ENCODE measurements at regions of chr3 and their contacts with region 1.

Region 1: GRCh38 chr3:66500576-66501482 is at the start of gene LRIG1:
- DNase-seq: peak; percentile 97
- ATAC-seq: peak; percentile 96
- H3K4me3 ChIP-seq: peak within 1 kb of the TSS; percentile 97
- H3K27ac ChIP-seq: peak within 1 kb of the TSS; percentile 95
- H3K4me1 ChIP-seq: peaks cover 1% of the 10 kb centered on the region
- H3K27me3 ChIP-seq: peaks cover 3% of the 10 kb centered on the region; the same call in 1 of the 2 replicates
- CTCF ChIP-seq: peak; percentile 38
- POLR2A ChIP-seq: peak; percentile 92
- RAD21 ChIP-seq: peak; percentile 31
- total RNA-seq, gene LRIG1: 69.2 and 87.8 TPM in 2 replicates

Region 2: GRCh38 chr3:66253790-66254620 is 246.8 kb before region 1 on chr3:
- CTCF ChIA-PET with region 1: no interaction called
- POLR2A ChIA-PET with region 1: no interaction called
- dilution Hi-C with region 1: no loop called
- in situ Hi-C with region 1: no loop called
- intact Hi-C with region 1: loop called (anchors 5 kb)
- DNase-seq: peak; percentile 67
- ATAC-seq: peak; percentile 70
- H3K4me3 ChIP-seq: no peak overlapping the region
- H3K27ac ChIP-seq: no peak overlapping the region
- H3K4me1 ChIP-seq: peaks cover 12% of the 10 kb centered on the region
- H3K27me3 ChIP-seq: no peaks in the 10 kb centered on the region
- CTCF ChIP-seq: peak; percentile 75
- POLR2A ChIP-seq: no peak
- RAD21 ChIP-seq: peak; percentile 77

Region 3: DNA sequence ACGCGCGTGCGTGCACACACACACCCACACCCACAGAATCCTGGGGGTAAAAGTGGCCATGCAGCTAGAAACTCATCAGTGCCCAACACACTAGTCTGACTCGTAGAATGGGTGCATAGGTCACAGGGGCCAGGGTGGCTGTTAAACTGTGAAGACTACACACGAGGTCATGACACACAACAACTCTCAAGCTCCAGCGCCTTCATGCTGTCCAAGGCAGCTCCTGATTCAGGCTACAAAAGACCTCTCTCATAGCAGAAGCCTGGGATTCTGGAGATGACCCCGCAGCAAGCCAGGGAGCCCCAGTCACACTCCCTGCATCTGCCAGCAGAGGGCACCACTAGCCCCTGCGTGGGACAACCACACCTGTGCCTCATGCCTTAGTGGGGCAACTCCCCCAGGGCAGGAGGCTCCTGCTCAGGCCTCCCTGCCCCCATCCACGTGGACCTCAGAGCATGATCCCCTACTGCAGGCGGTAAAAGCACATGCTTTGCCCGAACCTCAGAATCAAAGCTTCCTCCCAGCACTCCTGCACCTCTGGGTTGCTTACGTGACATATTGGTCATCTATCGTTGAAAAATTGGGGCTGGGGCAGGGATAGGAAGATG is 93.1 kb before region 1 on chr3:
- CTCF ChIA-PET with region 1: no interaction called
- POLR2A ChIA-PET with region 1: no interaction called
- dilution Hi-C with region 1: no loop called
- in situ Hi-C with region 1: no loop called
- intact Hi-C with region 1: loop called (anchors 1 kb)
- DNase-seq: peak; percentile 55
- ATAC-seq: peak; percentile 50; the same call in 1 of the 2 replicates
- H3K4me3 ChIP-seq: no peak overlapping the region
- H3K27ac ChIP-seq: no peak overlapping the region
- H3K4me1 ChIP-seq: peaks cover 25% of the 10 kb centered on the region
- H3K27me3 ChIP-seq: no peaks in the 10 kb centered on the region
- CTCF ChIP-seq: peak; percentile 80
- POLR2A ChIP-seq: no peak
- RAD21 ChIP-seq: peak; percentile 91

Region 4: GRCh38 chr3:66413151-66413751 is 87.6 kb before region 1 on chr3:
- CTCF ChIA-PET with region 1: no interaction called
- POLR2A ChIA-PET with region 1: no interaction called
- dilution Hi-C with region 1: no loop called
- in situ Hi-C with region 1: no loop called
- intact Hi-C with region 1: loop called (anchors 1 kb)
- DNase-seq: peak; percentile 100
- ATAC-seq: peak; percentile 93
- H3K4me3 ChIP-seq: no peak overlapping the region
- H3K27ac ChIP-seq: peak overlapping the region; percentile 79
- H3K4me1 ChIP-seq: peaks cover 22% of the 10 kb centered on the region
- H3K27me3 ChIP-seq: no peaks in the 10 kb centered on the region
- CTCF ChIP-seq: 0 out of 2 replicates have a peak, but pooled peaks have one; percentile 13
- POLR2A ChIP-seq: peak; percentile 46; the same call in 1 of the 2 replicates
- RAD21 ChIP-seq: peak; percentile 35

Region 5: DNA sequence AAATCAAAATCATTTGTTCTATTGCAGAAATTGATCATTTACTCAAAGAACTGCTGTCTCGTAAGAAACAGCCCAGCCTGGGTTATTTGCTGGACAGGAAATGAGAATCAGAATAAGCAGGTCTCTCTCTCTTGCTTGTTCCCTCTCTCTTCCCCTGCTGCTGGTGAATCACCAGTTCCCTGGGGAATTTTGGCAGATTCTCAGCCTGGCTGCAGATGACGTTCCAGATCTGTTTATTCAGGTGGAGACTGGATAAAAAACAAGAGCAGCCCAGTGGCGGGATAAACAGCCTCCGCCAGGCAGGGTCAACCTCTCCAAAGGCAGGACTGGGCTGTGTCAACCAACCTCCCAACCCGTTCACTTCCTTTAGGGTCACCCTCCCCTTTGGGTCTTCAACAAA is 72.1 kb before region 1 on chr3:
- CTCF ChIA-PET with region 1: no interaction called
- POLR2A ChIA-PET with region 1: no interaction called
- dilution Hi-C with region 1: no loop called
- in situ Hi-C with region 1: loop called (anchors 5 kb)
- intact Hi-C with region 1: no loop called
- DNase-seq: peak; percentile 100
- ATAC-seq: peak; percentile 66
- H3K4me3 ChIP-seq: no peak overlapping the region
- H3K27ac ChIP-seq: peak overlapping the region; percentile 62
- H3K4me1 ChIP-seq: peaks cover 37% of the 10 kb centered on the region
- H3K27me3 ChIP-seq: no peaks in the 10 kb centered on the region
- CTCF ChIP-seq: no peak
- POLR2A ChIP-seq: peak; percentile 52; the same call in 1 of the 2 replicates
- RAD21 ChIP-seq: peak; percentile 25

Region 6: DNA sequence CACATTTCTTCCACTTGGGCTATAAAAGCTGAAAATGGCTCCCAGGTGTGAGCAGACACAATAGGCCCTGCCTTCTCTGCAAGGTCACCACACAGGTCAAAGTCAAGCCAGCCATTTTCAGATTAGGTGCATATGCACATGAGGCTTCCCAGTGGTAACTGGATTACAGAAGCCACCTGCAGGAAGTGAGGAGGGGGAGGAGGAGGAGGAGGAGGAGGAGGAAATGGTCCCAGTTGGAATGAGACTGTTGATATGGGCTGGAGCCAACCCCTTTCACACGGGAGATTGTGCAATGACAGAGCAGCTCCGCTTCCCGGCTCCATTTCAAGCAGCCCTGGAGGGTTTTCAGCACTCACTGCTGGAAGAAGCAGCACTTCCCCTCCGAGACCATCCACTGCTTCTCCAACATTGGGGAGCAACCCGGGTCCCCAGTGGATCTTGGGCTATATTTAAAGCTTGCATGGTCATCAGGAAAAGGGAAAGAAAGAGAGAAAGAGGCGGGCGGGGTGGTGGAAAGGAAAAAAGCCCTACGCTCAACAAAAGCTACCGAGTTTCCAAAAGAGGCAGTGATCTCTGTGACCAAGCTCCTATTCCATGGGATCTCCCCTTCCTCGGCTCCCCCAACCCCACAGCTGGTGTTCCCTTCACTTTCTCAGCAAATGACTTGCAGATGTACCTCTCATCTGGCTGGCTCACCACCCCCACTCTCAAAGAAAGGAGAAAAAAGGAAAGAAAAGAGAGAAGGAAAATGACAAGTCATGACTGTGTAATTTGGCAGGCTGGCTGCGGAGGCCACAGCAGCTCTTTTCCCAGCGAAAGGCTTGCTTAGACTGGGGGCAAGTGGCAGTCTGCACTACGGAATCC is 58.3 kb before region 1 on chr3:
- CTCF ChIA-PET with region 1: no interaction called
- POLR2A ChIA-PET with region 1: no interaction called
- dilution Hi-C with region 1: no loop called
- in situ Hi-C with region 1: no loop called
- intact Hi-C with region 1: loop called (anchors 5 kb)
- DNase-seq: peak; percentile 93
- ATAC-seq: peak; percentile 77
- H3K4me3 ChIP-seq: no peak overlapping the region
- H3K27ac ChIP-seq: peak overlapping the region; percentile 77
- H3K4me1 ChIP-seq: peaks cover 27% of the 10 kb centered on the region
- H3K27me3 ChIP-seq: no peaks in the 10 kb centered on the region
- CTCF ChIP-seq: no peak
- POLR2A ChIP-seq: no peak
- RAD21 ChIP-seq: peak; percentile 18; the same call in 1 of the 2 replicates

Region 7: DNA sequence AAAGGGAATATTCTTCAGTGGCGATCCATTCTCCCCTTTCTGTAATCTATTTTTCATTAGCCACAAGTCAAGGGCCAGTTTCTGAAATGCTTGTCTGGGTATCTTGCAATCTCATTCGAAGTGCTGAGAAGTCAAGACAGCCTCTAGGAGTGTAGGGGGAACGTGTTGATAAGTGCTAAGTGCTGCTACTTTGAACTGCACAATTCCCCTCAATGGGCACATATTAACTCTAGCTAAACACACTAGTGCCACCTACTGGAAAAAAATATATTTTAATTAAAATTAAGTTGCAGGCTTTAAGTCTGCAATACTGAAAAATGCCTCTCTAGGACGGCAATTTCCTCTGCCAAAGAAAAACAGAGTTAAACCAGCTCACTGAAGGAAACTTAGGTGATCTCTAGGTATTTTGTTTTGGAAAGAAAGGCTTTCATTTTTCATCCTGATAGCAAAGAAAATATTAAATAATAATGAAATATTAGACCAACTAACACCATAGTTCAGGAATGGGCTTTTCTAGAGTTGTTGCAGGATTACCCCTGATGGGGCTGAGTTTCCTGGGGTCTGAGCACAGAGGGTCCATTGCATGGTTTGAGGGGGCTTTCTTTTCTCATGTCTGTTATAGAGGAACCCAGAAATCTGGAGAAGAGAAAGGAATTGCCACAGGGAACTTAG is 315.4 kb after region 1 on chr3:
- CTCF ChIA-PET with region 1: no interaction called
- POLR2A ChIA-PET with region 1: no interaction called
- dilution Hi-C with region 1: no loop called
- in situ Hi-C with region 1: loop called (anchors 5 kb)
- intact Hi-C with region 1: loop called (anchors 1 kb)
- DNase-seq: peak; percentile 83
- ATAC-seq: peak; percentile 91
- H3K4me3 ChIP-seq: no peak overlapping the region
- H3K27ac ChIP-seq: no peak overlapping the region
- H3K4me1 ChIP-seq: no peaks in the 10 kb centered on the region
- H3K27me3 ChIP-seq: peaks cover 5% of the 10 kb centered on the region
- CTCF ChIP-seq: peak; percentile 73
- POLR2A ChIP-seq: no peak
- RAD21 ChIP-seq: peak; percentile 92

Region 8: GRCh38 chr3:67296039-67296892 is 795.4 kb after region 1 on chr3:
- CTCF ChIA-PET with region 1: no interaction called
- POLR2A ChIA-PET with region 1: no interaction called
- dilution Hi-C with region 1: no loop called
- in situ Hi-C with region 1: no loop called
- intact Hi-C with region 1: no loop called
- DNase-seq: no peak
- ATAC-seq: no peak
- H3K4me3 ChIP-seq: no peak overlapping the region
- H3K27ac ChIP-seq: no peak overlapping the region
- H3K4me1 ChIP-seq: no peaks in the 10 kb centered on the region
- H3K27me3 ChIP-seq: no peaks in the 10 kb centered on the region
- CTCF ChIP-seq: no peak
- POLR2A ChIP-seq: no peak
- RAD21 ChIP-seq: no peak

Region 9: DNA sequence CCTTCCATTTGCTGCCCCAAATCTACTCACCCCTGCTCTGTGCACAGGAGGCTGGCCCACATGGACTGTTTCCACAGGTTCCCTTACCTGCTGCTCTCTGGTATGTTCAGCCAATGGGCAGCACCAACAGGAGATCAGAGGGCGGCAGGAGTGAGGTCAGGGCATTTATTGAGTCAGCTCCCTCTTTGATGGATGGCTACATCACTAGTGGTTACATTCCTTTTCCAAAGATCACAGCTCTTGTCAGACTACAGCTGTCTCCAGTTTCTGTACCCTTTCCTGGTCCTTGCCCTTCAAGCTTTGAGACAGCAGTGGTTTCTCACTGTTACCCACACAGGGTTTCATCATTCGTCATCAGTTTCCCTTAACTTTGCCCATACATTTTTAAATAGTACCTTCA is 828.5 kb after region 1 on chr3:
- CTCF ChIA-PET with region 1: no interaction called
- POLR2A ChIA-PET with region 1: no interaction called
- dilution Hi-C with region 1: no loop called
- in situ Hi-C with region 1: no loop called
- intact Hi-C with region 1: no loop called
- DNase-seq: no peak
- ATAC-seq: no peak
- H3K4me3 ChIP-seq: no peak overlapping the region
- H3K27ac ChIP-seq: no peak overlapping the region
- H3K4me1 ChIP-seq: no peaks in the 10 kb centered on the region
- H3K27me3 ChIP-seq: no peaks in the 10 kb centered on the region
- CTCF ChIP-seq: no peak
- POLR2A ChIP-seq: no peak
- RAD21 ChIP-seq: no peak

Measured in IMR-90 (cell line).